ENCODE measurements at regions of chr10 and their contacts with region 1.

Region 1: GRCh38 chr10:84004201-84004600 is 135.1 kb upstream of the GHITM start:
- DNase-seq: no peak
- H3K4me3 ChIP-seq: no peak overlapping the region
- H3K27ac ChIP-seq: no peak overlapping the region
- H3K4me1 ChIP-seq: no peaks in the 10 kb centered on the region
- H3K27me3 ChIP-seq: no peaks in the 10 kb centered on the region
- CTCF ChIP-seq: no peak
- EP300 ChIP-seq: no peak
- POLR2A ChIP-seq: no peak

Region 2: DNA sequence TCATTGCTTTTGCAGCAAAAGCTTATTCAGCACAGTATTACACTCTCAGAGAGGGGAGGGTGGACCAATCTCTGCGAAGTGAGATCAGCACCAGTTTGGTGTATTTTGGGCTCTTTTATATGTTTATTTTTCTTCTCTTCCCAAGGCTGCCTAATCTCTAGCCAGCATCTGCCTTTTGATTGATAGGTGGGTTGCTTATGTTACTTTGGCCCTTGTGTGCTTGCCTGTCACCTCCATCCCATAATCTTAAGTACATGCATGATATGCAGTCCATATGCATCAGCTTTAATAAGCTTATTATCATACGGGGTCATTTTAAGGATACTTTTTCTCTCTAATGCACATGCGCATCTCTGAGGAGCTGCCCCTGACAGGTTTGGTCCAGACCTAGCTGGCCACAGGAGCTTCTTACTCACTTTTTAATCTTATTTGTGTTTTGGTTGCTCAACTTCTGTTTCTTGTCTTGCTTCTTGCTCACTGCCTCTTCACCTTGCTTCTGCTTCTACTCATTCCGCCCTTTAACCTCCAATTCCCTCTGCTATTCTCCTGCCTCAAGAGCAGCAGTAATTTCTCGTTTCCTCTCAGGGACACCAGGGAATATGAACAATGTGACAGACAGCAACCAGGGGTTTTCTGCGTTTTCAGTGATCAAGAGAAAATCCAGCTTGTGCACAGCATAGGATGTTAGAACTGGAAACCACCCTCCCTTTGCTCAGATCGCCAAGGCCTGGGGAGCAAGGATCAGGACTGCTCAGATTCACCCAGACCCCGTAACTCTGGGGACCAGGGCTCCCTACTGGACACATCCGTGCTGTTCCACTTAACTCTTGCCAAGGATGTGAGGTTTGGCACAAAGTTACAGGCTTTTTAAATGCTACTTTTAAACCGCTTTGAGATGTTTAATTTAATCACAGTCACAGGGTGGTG is 250.6 kb after region 1 on chr10:
- intact Hi-C with region 1: loop called in 1 of 4 experiments (anchors 5 kb)
- DNase-seq: no peak
- H3K4me3 ChIP-seq: no peak overlapping the region
- H3K27ac ChIP-seq: no peak overlapping the region
- H3K4me1 ChIP-seq: no peaks in the 10 kb centered on the region
- H3K27me3 ChIP-seq: no peaks in the 10 kb centered on the region
- CTCF ChIP-seq: no peak
- EP300 ChIP-seq: no peak
- POLR2A ChIP-seq: no peak

Measured in ovary (tissue), 10 donors.